Right ventricle myocardium superior (tissue), 1 donor: ENCODE measurements at regions of chr5 and their contacts with region 1.

Region 1: GRCh38 chr5:6576861-6577501 is 55.9 kb downstream of the NSUN2 start:
- DNase-seq: no peak
- ATAC-seq: peak; percentile 69

Region 2: GRCh38 chr5:5886812-5887486 is 690.0 kb before region 1 on chr5:
- intact Hi-C with region 1: loop called (anchors 10 kb)
- DNase-seq: peak; percentile 40
- ATAC-seq: peak; percentile 75

Region 3: GRCh38 chr5:6496207-6496584 is 80.8 kb before region 1 on chr5:
- intact Hi-C with region 1: no loop called
- DNase-seq: no peak
- ATAC-seq: peak; percentile 21

Region 4: DNA sequence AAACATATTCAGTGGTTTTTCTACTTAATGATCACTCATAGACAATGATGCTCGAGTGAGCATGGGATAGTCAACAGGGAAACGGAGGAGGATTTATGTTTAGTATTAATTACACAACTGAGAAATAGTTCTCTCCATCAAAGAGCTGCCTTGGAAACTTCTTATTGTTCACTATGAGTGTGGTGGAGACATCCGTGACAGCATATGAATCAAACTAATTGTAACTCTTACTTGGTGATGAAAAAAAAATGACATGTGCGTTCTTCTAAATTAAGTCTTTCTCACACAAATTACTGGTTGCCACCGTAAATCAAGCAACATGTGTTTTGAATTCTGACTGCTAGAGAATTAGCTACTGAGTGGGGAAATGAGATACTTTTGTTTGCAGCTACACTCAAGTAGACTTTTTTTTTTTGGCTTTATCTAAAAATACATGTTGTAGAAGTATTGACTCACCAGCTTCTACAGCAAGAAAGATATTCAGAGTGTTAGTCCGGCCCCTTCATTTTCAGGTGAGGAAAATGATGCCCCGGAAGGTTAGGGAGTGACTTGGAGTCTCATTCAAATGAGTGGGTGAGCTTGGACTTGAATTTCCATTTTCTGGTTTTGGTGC is 1094.5 kb after region 1 on chr5:
- intact Hi-C with region 1: no loop called
- DNase-seq: no peak
- ATAC-seq: no peak